H1 (cell line): ENCODE measurements at regions of chr3 and their contacts with region 1.

Region 1: DNA sequence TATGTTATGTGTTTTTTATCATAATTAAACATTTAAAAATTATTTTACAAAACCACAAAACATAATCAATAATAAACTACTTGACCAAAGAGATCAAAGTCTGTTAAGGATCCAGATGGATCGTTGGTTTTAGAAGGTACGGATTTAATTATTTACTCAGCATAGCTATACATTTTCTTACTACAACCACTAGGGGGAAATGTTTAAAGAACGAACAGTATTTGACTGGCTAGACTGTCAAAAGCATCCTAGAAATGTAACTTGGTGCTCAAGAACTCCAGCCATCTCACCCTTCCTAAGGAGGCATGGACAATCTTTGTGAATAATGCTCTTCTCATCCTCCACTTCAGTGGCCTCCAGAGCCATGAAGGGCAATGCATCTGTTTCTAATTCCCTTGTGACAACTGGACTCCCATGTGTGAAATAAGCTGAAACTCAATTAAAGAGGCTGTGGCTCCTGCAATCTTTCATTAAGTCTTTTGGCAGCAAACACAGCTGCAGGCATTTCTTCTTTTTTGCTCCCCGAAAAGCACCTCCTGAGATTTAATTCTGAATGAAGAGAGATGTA is 94.7 kb upstream of the TUSC7 start:
- DNase-seq: no peak
- H3K4me3 ChIP-seq: no peak overlapping the region
- H3K27ac ChIP-seq: no peak overlapping the region
- H3K4me1 ChIP-seq: no peaks in the 10 kb centered on the region
- H3K27me3 ChIP-seq: peaks cover 0 to 1% (median 0%) of the 10 kb centered on the region in 4 experiments; a peak in 1 of 7 replicates
- CTCF ChIP-seq: peak in 2 of 3 experiments; percentile 2 to 61; a peak in 2 of 4 replicates
- EP300 ChIP-seq: no peak
- POLR2A ChIP-seq: no peak
- RAD21 ChIP-seq: peak; percentile 30 to 47; a peak in 3 of 4 replicates

Region 2: DNA sequence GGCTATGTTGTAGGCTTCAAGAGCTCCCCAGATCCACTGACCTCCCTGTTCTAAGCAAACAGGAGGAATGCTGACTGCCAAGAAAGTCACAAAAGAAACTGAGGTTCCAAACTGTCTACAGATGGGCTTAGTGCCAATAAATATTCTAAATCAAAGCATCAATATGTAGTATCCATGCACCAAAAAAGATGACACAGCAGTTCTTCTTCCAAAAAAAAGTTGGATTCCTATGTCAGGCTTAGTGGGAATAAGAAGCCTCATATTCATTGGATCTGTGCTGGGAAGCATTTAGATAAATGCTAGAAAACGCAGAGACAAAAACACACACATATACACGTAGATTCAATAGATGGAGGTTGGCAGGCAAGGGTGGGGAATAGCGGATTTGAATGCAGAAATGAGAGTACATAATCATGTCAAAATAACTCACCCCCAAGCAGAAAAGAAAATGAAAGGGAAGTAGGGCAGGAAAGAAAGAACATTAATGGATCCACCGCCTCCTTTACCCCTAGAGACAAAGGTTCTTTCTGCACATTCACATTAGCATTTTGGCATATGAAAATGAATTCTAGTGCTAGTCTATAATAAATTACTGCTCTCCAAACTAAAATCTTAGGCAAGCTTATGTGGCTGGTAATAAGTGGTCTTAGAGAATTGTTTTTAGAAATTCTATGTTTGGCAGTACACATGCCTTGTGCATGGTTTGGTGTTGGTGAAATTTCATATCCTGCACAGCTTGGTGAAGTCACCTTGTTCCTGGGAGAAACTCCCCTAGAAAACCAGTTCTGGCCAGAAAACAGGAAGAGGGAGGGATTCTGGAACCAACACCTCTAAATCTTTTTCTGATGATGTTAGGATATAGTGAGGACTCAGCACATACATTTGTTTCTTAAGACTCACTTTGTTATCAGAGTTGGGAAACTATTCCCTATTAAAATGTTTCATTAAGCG is 453.0 kb before region 1 on chr3:
- CTCF ChIA-PET with region 1: no interaction called
- POLR2A ChIA-PET with region 1: no interaction called
- DNase-seq: no peak
- H3K4me3 ChIP-seq: no peak overlapping the region
- H3K27ac ChIP-seq: no peak overlapping the region
- H3K4me1 ChIP-seq: no peaks in the 10 kb centered on the region; a peak in 1 of 7 replicates
- H3K27me3 ChIP-seq: no peaks in the 10 kb centered on the region
- CTCF ChIP-seq: no peak
- EP300 ChIP-seq: no peak
- POLR2A ChIP-seq: no peak
- RAD21 ChIP-seq: no peak

Region 3: GRCh38 chr3:116322750-116323375 is 292.0 kb before region 1 on chr3:
- CTCF ChIA-PET with region 1: no interaction called
- POLR2A ChIA-PET with region 1: no interaction called
- DNase-seq: no peak
- H3K4me3 ChIP-seq: no peak overlapping the region
- H3K27ac ChIP-seq: no peak overlapping the region
- H3K4me1 ChIP-seq: no peaks in the 10 kb centered on the region
- H3K27me3 ChIP-seq: no peaks in the 10 kb centered on the region
- CTCF ChIP-seq: no peak
- EP300 ChIP-seq: no peak
- POLR2A ChIP-seq: no peak
- RAD21 ChIP-seq: no peak

Region 4: DNA sequence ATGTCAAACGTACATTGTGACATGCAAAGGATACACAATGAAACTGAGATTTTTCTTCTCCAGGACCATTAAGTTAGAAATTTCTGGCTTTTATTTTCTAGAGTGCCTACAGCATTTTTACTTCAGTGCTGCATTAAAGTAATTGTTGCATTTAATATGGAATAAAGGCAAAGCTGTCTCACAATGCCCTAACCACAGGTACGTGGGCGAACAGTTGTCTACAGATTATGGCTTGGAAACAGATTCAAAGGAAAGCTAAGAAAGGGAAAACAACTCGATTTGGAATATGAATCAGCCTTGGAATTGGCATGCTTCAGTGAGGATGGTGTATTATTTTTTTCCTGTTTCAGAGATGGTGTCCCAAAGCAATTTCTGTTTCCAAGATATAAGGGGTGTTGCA is 15.6 kb after region 1 on chr3:
- CTCF ChIA-PET with region 1: interaction called, 15 read pairs
- POLR2A ChIA-PET with region 1: no interaction called
- DNase-seq: no peak
- H3K4me3 ChIP-seq: no peak overlapping the region
- H3K27ac ChIP-seq: no peak overlapping the region
- H3K4me1 ChIP-seq: no peaks in the 10 kb centered on the region
- H3K27me3 ChIP-seq: no peaks in the 10 kb centered on the region
- CTCF ChIP-seq: no peak
- EP300 ChIP-seq: no peak
- POLR2A ChIP-seq: no peak
- RAD21 ChIP-seq: no peak

Region 5: DNA sequence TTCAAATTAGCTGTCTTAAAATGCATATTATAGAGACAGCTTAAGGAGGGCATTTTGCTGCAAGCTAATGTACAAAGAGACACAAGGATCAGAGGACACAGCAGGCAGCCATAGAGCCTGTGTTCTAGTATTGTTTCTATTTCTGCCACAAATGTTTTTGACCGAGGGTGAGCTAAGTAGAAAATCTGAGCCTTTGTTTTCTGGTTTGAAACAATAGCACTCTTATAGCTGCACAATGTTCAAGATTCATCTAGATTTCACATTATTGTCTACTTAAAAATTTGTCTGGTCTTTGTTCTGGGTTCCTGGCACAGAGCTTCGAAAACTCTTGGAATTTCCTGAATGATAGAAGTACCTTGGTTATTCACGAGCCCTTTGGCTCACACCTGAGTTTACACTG is 54.7 kb after region 1 on chr3:
- CTCF ChIA-PET with region 1: no interaction called
- POLR2A ChIA-PET with region 1: no interaction called
- DNase-seq: no peak
- H3K4me3 ChIP-seq: no peak overlapping the region
- H3K27ac ChIP-seq: no peak overlapping the region
- H3K4me1 ChIP-seq: no peaks in the 10 kb centered on the region
- H3K27me3 ChIP-seq: no peaks in the 10 kb centered on the region
- CTCF ChIP-seq: no peak
- EP300 ChIP-seq: no peak
- POLR2A ChIP-seq: no peak
- RAD21 ChIP-seq: no peak

Region 6: GRCh38 chr3:116734243-116734642 is 119.4 kb after region 1 on chr3:
- CTCF ChIA-PET with region 1: interaction called, 12 read pairs
- POLR2A ChIA-PET with region 1: no interaction called
- DNase-seq: no peak
- H3K4me3 ChIP-seq: no peak overlapping the region
- H3K27ac ChIP-seq: no peak overlapping the region
- H3K4me1 ChIP-seq: no peaks in the 10 kb centered on the region
- H3K27me3 ChIP-seq: no peaks in the 10 kb centered on the region
- CTCF ChIP-seq: no peak
- EP300 ChIP-seq: no peak
- POLR2A ChIP-seq: no peak
- RAD21 ChIP-seq: no peak

Region 7: GRCh38 chr3:116806351-116806750 is 191.5 kb after region 1 on chr3:
- CTCF ChIA-PET with region 1: no interaction called
- POLR2A ChIA-PET with region 1: no interaction called
- DNase-seq: no peak
- H3K4me3 ChIP-seq: no peak overlapping the region
- H3K27ac ChIP-seq: no peak overlapping the region
- H3K4me1 ChIP-seq: no peaks in the 10 kb centered on the region
- H3K27me3 ChIP-seq: no peaks in the 10 kb centered on the region
- CTCF ChIP-seq: no peak
- EP300 ChIP-seq: no peak
- POLR2A ChIP-seq: no peak
- RAD21 ChIP-seq: no peak